ENCODE measurements at regions of chr5 and their contacts with region 1.

Region 1: GRCh38 chr5:32585446-32586275 is at the start of gene SUB1:
- DNase-seq: peak; percentile 96
- H3K4me3 Mint-ChIP-seq: peak within 1 kb of the TSS; percentile 86
- H3K27ac Mint-ChIP-seq: peak within 1 kb of the TSS; percentile 96
- H3K4me1 Mint-ChIP-seq: peaks cover 61% of the 10 kb centered on the region
- H3K27me3 Mint-ChIP-seq: no peaks in the 10 kb centered on the region
- total RNA-seq, gene SUB1: 528 to 531 TPM

Region 2: GRCh38 chr5:32232441-32233219 is 353.0 kb before region 1 on chr5:
- CTCF ChIA-PET with region 1: interaction called, 12 read pairs
- POLR2A ChIA-PET with region 1: no interaction called
- intact Hi-C with region 1: no loop called
- DNase-seq: peak; percentile 85
- H3K4me3 Mint-ChIP-seq: no peak overlapping the region
- H3K27ac Mint-ChIP-seq: no peak overlapping the region
- H3K4me1 Mint-ChIP-seq: no peaks in the 10 kb centered on the region
- H3K27me3 Mint-ChIP-seq: no peaks in the 10 kb centered on the region

Region 3: DNA sequence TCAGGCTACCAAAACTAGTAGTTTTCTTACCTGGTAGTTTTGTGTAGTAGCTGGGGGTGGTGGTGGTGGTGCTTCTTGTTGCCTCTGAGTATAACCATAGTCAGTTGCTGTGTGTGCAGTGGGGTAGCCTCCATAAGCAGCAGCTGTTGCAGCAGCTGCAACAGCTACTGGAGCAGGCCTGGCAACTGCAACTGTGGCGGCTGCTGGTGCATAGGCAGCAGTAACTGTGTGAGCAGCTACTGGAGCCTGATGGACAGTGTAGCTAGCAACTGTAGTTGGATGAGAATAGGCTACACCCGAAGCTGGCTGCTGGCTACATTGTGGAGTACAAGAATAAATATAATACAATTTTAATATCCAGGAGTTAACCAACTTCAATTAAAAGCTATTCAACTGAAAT is 165.9 kb before region 1 on chr5:
- CTCF ChIA-PET with region 1: interaction called, 10 read pairs
- POLR2A ChIA-PET with region 1: no interaction called
- intact Hi-C with region 1: no loop called
- DNase-seq: no peak
- H3K4me3 Mint-ChIP-seq: no peak overlapping the region
- H3K27ac Mint-ChIP-seq: no peak overlapping the region
- H3K4me1 Mint-ChIP-seq: peaks cover 40% of the 10 kb centered on the region
- H3K27me3 Mint-ChIP-seq: no peaks in the 10 kb centered on the region

Region 4: GRCh38 chr5:32482193-32482592 is 103.5 kb before region 1 on chr5:
- CTCF ChIA-PET with region 1: interaction called, 342 read pairs
- POLR2A ChIA-PET with region 1: interaction called, 19 read pairs
- intact Hi-C with region 1: no loop called
- DNase-seq: no peak
- H3K4me3 Mint-ChIP-seq: no peak overlapping the region
- H3K27ac Mint-ChIP-seq: no peak overlapping the region
- H3K4me1 Mint-ChIP-seq: no peaks in the 10 kb centered on the region
- H3K27me3 Mint-ChIP-seq: no peaks in the 10 kb centered on the region

Region 5: DNA sequence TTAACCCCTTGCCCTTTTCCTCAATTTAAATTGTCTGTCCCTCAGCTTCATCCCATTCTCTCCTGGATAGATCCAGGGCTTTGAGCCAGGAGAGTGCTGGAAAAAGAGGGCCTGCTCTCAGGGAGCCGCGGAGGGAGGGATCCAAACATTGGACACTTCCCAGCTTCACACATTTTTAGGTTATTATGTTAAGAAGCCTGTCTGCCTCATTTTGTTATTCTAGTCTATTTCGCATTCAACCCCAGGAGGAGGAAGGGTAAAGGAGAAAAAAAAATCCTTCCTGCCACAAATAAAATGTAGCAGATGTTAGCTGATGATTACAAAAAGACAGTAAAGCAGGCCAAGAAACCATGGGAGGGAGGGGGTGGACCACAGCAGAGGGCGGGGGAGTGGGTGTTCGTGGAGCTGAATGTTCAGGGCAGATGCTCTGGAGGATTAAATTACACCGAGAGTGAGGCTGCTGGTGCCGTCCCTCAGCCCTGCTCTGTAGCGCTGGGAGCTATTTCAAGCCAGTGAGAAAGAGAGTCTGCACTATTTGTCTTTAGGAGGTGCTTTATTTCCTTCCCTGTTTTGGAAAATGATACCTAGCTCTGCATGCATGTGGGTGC is 80.6 kb before region 1 on chr5:
- CTCF ChIA-PET with region 1: interaction called, 23 read pairs
- POLR2A ChIA-PET with region 1: no interaction called
- intact Hi-C with region 1: no loop called
- DNase-seq: no peak
- H3K4me3 Mint-ChIP-seq: no peak overlapping the region
- H3K27ac Mint-ChIP-seq: no peak overlapping the region
- H3K4me1 Mint-ChIP-seq: peaks cover 14% of the 10 kb centered on the region
- H3K27me3 Mint-ChIP-seq: no peaks in the 10 kb centered on the region

Region 6: DNA sequence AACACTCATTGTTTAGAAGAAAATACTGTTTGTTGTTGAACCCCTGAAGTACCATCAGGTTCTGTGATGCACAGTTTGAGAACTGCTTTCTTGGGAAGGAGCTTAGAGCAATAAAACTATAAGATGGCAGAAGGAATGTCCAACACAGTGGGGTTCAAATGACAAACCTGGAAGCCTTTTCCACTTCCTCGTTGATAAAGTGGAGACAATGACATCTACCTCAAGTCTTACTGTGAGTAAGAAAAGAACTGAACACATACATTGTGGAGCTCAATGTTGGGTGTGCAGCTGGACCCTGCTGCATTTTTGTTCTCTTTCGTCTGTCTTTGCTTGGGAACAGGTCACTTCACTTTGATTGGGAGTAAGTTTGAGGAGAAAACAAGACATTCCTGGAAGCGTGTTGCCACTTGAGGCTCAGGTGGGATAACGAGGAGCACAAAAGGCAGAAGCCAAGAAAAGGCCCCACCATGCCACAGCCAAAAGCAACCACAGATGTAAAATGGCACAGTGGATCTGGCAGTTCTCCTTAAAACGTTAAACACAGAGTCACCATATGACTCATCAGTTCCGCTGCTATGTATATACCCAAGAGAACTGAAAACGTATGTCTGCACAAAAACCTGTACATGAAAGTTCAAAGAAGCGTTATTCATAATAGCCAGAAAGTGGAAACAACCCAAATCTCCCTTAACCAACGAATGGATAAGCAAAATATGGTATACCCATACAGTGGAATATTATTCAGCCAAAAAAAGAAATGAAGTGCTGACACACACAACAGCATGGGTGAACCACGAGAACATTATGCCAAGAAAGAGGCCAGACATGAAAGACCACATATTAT is 43.2 kb before region 1 on chr5:
- CTCF ChIA-PET with region 1: interaction called, 12 read pairs
- POLR2A ChIA-PET with region 1: interaction called, 12 read pairs
- intact Hi-C with region 1: loop called (anchors 1 kb)
- DNase-seq: peak; percentile 65
- H3K4me3 Mint-ChIP-seq: peak overlapping the region; percentile 36
- H3K27ac Mint-ChIP-seq: peak overlapping the region; percentile 94
- H3K4me1 Mint-ChIP-seq: peaks cover 57% of the 10 kb centered on the region
- H3K27me3 Mint-ChIP-seq: no peaks in the 10 kb centered on the region

Region 7: DNA sequence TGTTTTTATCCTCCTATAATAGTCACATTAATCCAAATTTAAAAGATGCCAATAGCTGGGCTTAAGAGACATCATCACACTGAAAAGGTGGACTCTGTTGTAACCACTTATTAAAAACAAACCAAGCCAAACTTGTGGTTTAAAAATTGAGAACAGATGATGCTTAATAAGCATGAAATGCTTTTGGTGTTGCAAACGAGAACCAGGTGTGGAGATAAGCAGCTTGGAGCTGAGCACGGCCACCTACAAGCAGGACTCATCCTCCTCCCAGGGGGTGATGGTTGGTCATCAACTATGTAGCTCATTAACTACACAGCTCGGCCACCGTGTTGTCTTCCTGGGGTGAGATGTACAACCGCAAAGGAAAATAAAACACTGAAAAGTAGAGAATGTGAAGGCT is 279.8 kb after region 1 on chr5:
- CTCF ChIA-PET with region 1: no interaction called
- POLR2A ChIA-PET with region 1: no interaction called
- intact Hi-C with region 1: no loop called
- DNase-seq: no peak
- H3K4me3 Mint-ChIP-seq: no peak overlapping the region
- H3K27ac Mint-ChIP-seq: no peak overlapping the region
- H3K4me1 Mint-ChIP-seq: no peaks in the 10 kb centered on the region
- H3K27me3 Mint-ChIP-seq: no peaks in the 10 kb centered on the region

Region 8: DNA sequence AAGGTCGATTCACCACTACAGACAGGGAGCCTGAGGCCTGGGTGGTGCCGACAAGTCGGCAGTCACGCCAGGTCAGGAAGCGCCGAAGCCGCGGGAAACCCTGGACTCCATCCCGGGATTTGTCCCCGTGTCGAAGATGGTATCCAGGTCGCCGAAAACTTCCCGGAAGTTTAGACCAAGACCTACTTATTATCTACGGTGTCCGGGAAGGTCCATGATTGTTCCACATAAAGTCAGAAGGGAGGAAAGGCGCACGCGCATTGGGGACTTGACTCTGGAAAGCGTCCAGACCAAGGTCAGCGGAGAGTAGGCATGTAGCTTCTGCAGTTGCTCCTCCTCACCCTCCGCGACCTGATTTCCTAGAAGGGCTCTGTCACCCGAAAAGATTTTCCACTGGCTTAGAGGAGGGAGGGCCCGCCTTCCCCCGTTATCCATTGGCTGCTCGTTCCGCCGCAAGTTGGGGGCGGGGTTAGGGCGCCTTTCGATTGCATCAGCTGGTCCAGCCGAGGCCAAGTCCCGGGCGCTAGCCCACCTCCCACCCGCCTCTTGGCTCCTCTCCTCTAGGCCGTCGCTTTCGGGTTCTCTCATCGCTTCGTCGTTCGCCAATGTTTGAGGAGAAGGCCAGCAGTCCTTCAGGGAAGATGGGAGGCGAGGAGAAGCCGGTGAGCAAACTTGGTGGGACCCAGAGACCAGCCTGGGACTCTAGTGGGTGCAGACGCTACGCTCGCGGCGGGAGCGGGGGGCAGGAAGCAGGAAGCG is 855.0 kb after region 1 on chr5 and contains the start of gene TARS1:
- CTCF ChIA-PET with region 1: no interaction called
- POLR2A ChIA-PET with region 1: no interaction called
- intact Hi-C with region 1: loop called (anchors 5 kb)
- DNase-seq: peak; percentile 97
- H3K4me3 Mint-ChIP-seq: no peak within 1 kb of the TSS
- H3K27ac Mint-ChIP-seq: no peak within 1 kb of the TSS
- H3K4me1 Mint-ChIP-seq: peaks cover 24% of the 10 kb centered on the region
- H3K27me3 Mint-ChIP-seq: no peaks in the 10 kb centered on the region
- total RNA-seq, gene TARS1: 240 to 248 TPM

Measured in activated CD4-positive, alpha-beta memory T cell treated with anti-CD3 and anti-CD28 coated beads for 36 hours (primary cell).